Calu3 (cell line): ENCODE measurements at regions of chr14 and their contacts with region 1.

Region 1: DNA sequence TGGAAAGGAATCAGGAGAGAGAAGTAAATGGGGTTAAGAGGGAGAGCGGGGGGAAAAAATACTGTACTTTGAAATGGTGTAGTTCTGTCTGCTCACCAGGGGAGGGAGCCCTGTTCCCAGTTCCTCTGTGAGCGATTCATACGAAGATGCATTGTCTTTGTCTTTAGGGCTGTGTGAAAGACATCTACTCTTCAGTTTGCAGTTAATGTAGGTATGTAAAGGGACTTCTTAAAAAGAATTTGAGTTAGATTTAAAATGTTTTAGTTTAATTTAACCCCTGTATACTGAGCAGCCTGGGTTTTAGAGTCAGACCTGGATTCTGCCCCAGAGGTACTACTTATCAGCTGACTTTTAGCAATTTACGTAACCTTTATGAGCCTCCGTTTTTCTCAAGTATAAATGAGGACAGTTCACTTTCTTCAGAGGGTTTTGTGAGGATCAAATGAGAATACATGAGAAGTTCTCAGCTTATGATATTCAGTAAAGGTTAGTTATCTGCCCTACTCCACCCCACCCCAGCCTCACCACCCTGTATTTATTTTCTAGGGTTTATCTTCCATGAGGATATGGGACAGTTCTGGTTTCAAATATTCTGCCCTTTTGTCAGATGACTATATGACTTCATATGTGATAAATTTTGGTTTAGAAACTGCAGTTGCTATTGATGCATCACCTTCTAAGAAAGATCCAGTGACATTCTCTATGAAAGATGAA is 82.5 kb upstream of the EVL start:
- DNase-seq: peak; percentile 59
- H3K4me3 Mint-ChIP-seq: no peak overlapping the region
- H3K27ac Mint-ChIP-seq: no peak overlapping the region
- H3K4me1 Mint-ChIP-seq: peaks cover 8% of the 10 kb centered on the region
- H3K27me3 Mint-ChIP-seq: no peaks in the 10 kb centered on the region
- CTCF ChIP-seq: peak; percentile 70

Region 2: DNA sequence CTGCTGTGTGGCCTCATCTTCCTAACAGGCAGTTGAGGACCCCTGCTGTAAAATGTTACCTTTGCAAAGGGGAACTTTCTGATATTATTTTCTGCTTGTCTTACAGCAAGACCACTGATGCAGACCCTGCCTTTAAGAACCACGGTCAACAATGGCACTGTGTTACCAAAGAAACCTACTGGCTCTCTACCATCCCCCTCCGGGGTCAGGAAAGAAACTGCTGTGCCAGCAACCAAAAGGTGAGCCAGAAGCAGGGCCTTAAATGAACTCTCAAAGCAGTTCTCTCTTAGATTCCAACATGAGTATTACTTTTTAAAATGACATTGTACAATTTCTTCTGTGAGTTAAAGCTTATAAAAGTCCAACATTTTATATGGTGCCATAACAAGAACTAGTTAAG is 117.3 kb before region 1 on chr14:
- CTCF ChIA-PET with region 1: no interaction called
- intact Hi-C with region 1: no loop called
- DNase-seq: no peak
- H3K4me3 Mint-ChIP-seq: no peak overlapping the region
- H3K27ac Mint-ChIP-seq: no peak overlapping the region
- H3K4me1 Mint-ChIP-seq: no peaks in the 10 kb centered on the region
- H3K27me3 Mint-ChIP-seq: peaks cover 50% of the 10 kb centered on the region
- CTCF ChIP-seq: no peak

Region 3: GRCh38 chr14:100025111-100025510 is 42.4 kb after region 1 on chr14:
- CTCF ChIA-PET with region 1: interaction called, 3 read pairs
- intact Hi-C with region 1: loop called (anchors 1 kb)
- DNase-seq: peak; percentile 74
- H3K4me3 Mint-ChIP-seq: no peak overlapping the region
- H3K27ac Mint-ChIP-seq: no peak overlapping the region
- H3K4me1 Mint-ChIP-seq: peaks cover 21% of the 10 kb centered on the region
- H3K27me3 Mint-ChIP-seq: no peaks in the 10 kb centered on the region
- CTCF ChIP-seq: peak; percentile 17

Region 4: DNA sequence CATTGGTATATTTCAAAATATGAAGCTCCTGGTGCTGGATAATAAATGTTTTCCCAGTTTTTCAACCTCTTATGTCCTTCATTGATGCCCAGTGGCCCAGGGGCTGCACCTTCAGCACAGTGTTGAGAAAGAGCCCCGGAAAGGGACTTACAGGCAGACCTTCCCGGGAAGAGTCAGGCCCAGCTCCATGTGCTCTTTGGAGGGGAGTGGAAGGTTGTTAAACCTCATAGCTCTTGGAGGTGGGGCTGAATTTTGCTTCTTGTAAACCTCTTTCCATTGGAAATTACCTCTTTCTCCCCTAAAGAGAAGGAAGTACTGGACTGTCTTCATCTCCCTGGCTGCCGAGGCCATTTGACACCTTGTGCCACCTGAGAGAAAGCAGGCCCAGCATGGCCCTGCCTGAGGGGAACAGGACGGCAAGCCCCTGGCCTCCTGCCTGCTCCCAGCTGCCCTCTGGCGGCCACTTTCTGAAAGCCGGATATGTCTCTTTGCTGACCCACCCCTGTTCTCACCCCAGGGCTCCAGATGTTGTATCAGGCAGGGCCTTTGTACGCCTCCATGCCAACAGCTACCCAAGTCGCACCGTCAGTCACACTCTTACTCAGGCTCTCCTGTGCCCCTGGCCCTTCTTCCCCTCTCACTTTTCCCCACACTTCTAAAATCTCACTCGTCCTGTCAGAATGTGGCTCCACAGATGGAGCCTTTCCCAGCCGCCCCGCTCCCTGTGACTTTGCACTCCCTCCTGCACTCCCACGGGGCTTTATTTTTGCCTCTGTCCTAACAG is 125.5 kb after region 1 on chr14:
- CTCF ChIA-PET with region 1: interaction called, 10 read pairs
- intact Hi-C with region 1: loop called (anchors 1 kb)
- DNase-seq: peak; percentile 86
- H3K4me3 Mint-ChIP-seq: no peak overlapping the region
- H3K27ac Mint-ChIP-seq: no peak overlapping the region
- H3K4me1 Mint-ChIP-seq: peaks cover 16% of the 10 kb centered on the region
- H3K27me3 Mint-ChIP-seq: no peaks in the 10 kb centered on the region
- CTCF ChIP-seq: peak; percentile 78

Region 5: DNA sequence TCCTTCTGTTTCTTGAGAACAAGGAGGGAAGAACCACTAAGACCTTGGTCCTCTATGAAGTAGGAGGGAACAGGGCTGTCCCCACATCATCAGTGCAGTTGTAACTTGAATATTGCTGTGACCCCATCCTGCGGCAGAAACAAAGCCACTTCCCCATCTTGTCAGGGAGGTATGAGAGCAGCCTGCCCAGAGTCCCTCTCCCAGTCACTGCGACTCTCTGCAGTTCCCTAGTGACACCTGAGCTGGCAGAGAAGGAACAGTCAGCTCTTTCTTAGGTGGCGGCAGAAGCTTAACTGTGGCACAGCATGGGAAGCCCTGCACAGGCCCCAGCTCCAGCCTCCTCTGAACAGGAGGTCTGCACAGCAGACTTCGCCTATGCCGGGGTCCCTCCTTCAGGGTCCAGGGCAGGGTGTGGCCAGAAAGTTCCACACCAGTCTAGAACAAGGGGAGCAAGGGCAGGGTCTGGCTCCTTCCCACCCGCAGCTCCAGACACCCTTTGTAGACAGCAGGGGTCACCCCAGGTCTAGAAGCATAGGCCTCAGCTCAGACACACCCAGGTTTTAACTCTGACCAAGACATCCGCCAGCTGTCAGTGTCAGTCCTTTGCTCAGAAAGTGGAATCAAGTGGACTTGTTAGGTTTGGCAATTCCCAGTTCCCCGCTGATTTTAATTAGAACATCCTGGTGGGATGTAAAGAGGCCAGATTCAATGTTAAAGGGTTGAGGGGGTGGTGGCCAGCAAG is 140.0 kb after region 1 on chr14:
- CTCF ChIA-PET with region 1: no interaction called
- intact Hi-C with region 1: no loop called
- DNase-seq: no peak
- H3K4me3 Mint-ChIP-seq: no peak overlapping the region
- H3K27ac Mint-ChIP-seq: no peak overlapping the region
- H3K4me1 Mint-ChIP-seq: no peaks in the 10 kb centered on the region
- H3K27me3 Mint-ChIP-seq: no peaks in the 10 kb centered on the region
- CTCF ChIP-seq: no peak